Aorta (tissue), 5 donors: ENCODE measurements at regions of chr10 and their contacts with region 1.

Region 1: GRCh38 chr10:12907656-12908055 is 93.9 kb downstream of the CCDC3 start:
- DNase-seq: peak in 1 of 2 donors; percentile 62
- ATAC-seq: no peak
- H3K4me3 ChIP-seq: no peak overlapping the region
- H3K27ac ChIP-seq: no peak overlapping the region
- H3K4me1 ChIP-seq: no peaks in the 10 kb centered on the region
- H3K27me3 ChIP-seq: no peaks in the 10 kb centered on the region

Region 2: GRCh38 chr10:13087986-13088618 is 180.4 kb after region 1 on chr10:
- intact Hi-C with region 1: loop called in 1 of 2 experiments (anchors 5 kb)
- DNase-seq: no peak
- ATAC-seq: peak; percentile 67
- H3K4me3 ChIP-seq: no peak overlapping the region
- H3K27ac ChIP-seq: no peak overlapping the region
- H3K4me1 ChIP-seq: peaks cover 0 to 2% of the 10 kb centered on the region in 2 donors
- H3K27me3 ChIP-seq: no peaks in the 10 kb centered on the region